GM10248 (cell line): ENCODE measurements at regions of chr2 and their contacts with region 1.

Region 1: GRCh38 chr2:241734467-241735208 is at the start of gene D2HGDH:
- DNase-seq: peak; percentile 98
- CTCF ChIP-seq: no peak

Region 2: GRCh38 chr2:241686649-241687425 is 47.8 kb before region 1 on chr2 and contains the start of gene DTYMK:
- CTCF ChIA-PET with region 1: interaction called, 13 read pairs
- POLR2A ChIA-PET with region 1: no interaction called
- DNase-seq: peak; percentile 99
- CTCF ChIP-seq: no peak

Region 3: DNA sequence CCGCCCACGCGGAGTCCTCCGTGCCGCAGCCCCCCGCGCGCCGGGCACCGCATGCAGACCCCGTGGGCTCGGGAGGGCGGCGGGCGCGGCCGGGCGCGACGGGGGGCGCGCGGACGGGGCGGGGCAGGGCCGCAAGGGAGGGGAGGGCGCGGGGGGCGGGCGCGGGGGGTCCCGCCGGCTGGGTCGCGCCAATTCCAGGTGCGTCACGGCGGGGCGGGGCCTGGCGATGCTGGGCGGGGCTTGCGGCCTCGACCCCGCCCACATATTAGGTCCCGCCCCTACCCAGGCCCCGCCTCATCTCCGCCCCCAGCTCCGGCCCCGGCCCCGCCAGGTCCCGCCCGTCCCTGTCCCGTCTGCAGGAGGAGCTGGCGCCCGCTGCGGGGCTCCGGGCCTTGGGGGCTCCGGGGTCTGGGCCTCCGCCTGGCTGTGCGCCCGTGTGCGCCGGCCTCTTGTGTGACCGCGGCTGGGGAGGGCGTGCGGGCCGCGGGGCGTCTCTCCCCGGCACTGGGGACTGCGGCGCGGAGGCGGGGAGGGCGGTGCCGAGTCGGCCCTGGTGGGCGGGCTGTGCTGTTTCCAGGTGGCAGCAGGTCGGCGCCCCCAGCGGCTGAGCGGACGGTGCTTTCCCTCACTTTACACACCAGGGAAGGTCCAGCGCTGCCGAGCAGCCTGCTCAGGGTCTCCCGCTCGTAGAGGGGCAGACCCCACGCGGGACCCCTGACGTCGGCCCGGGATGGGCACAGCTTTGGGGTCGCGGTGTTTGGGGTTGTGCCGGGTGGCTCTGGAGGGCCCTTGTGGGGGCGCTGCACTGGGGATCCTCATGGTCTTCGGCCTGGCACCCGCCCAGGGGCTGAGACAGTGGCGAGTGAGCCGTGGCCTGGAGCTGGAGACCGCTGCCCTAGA is 32.3 kb before region 1 on chr2:
- CTCF ChIA-PET with region 1: interaction called, 39 read pairs
- POLR2A ChIA-PET with region 1: interaction called, 3 read pairs
- DNase-seq: peak; percentile 95
- CTCF ChIP-seq: peak; percentile 38

Region 4: GRCh38 chr2:241750076-241750840 is 15.6 kb after region 1 on chr2:
- CTCF ChIA-PET with region 1: no interaction called
- POLR2A ChIA-PET with region 1: no interaction called
- DNase-seq: no peak
- CTCF ChIP-seq: no peak

Region 5: GRCh38 chr2:241877989-241878970 is 143.6 kb after region 1 on chr2:
- CTCF ChIA-PET with region 1: interaction called, 10 read pairs
- POLR2A ChIA-PET with region 1: no interaction called
- DNase-seq: peak; percentile 78
- CTCF ChIP-seq: peak; percentile 92